GM12878 (cell line): ENCODE measurements at regions of chr5 and their contacts with region 1.

Region 1: GRCh38 chr5:33588654-33589372 is 148.0 kb downstream of the TARS1 start:
- DNase-seq: no peak
- ATAC-seq: peak; percentile 83
- H3K4me3 ChIP-seq: no peak overlapping the region
- H3K27ac ChIP-seq: no peak overlapping the region
- H3K4me1 ChIP-seq: no peaks in the 10 kb centered on the region
- H3K27me3 ChIP-seq: no peaks in the 10 kb centered on the region
- CTCF ChIP-seq: peak; percentile 35 to 59 (median 53)
- EP300 ChIP-seq: no peak
- POLR2A ChIP-seq: no peak
- RAD21 ChIP-seq: peak; percentile 55

Region 2: GRCh38 chr5:33576726-33577590 is 11.9 kb before region 1 on chr5:
- CTCF ChIA-PET with region 1: interaction called, 22 read pairs
- POLR2A ChIA-PET with region 1: no interaction called
- RAD21 ChIA-PET with region 1: no interaction called
- SMC1A ChIA-PET with region 1: interaction called, 4 read pairs
- in situ Hi-C with region 1: no loop called
- intact Hi-C with region 1: no loop called
- DNase-seq: no peak
- ATAC-seq: no peak
- H3K4me3 ChIP-seq: no peak overlapping the region
- H3K27ac ChIP-seq: no peak overlapping the region
- H3K4me1 ChIP-seq: no peaks in the 10 kb centered on the region
- H3K27me3 ChIP-seq: no peaks in the 10 kb centered on the region
- CTCF ChIP-seq: no peak
- EP300 ChIP-seq: no peak
- POLR2A ChIP-seq: no peak
- RAD21 ChIP-seq: no peak

Region 3: GRCh38 chr5:33601881-33602280 is 13.1 kb after region 1 on chr5:
- CTCF ChIA-PET with region 1: interaction called, 22 read pairs
- POLR2A ChIA-PET with region 1: no interaction called
- RAD21 ChIA-PET with region 1: no interaction called
- SMC1A ChIA-PET with region 1: interaction called, 8 read pairs
- in situ Hi-C with region 1: no loop called
- intact Hi-C with region 1: no loop called
- DNase-seq: no peak
- ATAC-seq: no peak
- H3K4me3 ChIP-seq: no peak overlapping the region
- H3K27ac ChIP-seq: no peak overlapping the region
- H3K4me1 ChIP-seq: no peaks in the 10 kb centered on the region; the same call in 1 of the 2 replicates
- H3K27me3 ChIP-seq: no peaks in the 10 kb centered on the region
- CTCF ChIP-seq: no peak
- EP300 ChIP-seq: no peak
- POLR2A ChIP-seq: no peak
- RAD21 ChIP-seq: no peak